PC-9 (cell line): ENCODE measurements at regions of chr22 and their contacts with region 1.

Region 1: GRCh38 chr22:29701155-29701999 is 18.4 kb upstream of the CABP7 start:
- DNase-seq: peak; percentile 60 to 93
- H3K4me3 ChIP-seq: peak overlapping the region; percentile 9; the same call in 1 of the 2 replicates
- H3K27ac ChIP-seq: peak overlapping the region; percentile 81
- H3K4me1 ChIP-seq: peaks cover 54% of the 10 kb centered on the region
- H3K27me3 ChIP-seq: no peaks in the 10 kb centered on the region
- CTCF ChIP-seq: peak; percentile 70

Region 2: DNA sequence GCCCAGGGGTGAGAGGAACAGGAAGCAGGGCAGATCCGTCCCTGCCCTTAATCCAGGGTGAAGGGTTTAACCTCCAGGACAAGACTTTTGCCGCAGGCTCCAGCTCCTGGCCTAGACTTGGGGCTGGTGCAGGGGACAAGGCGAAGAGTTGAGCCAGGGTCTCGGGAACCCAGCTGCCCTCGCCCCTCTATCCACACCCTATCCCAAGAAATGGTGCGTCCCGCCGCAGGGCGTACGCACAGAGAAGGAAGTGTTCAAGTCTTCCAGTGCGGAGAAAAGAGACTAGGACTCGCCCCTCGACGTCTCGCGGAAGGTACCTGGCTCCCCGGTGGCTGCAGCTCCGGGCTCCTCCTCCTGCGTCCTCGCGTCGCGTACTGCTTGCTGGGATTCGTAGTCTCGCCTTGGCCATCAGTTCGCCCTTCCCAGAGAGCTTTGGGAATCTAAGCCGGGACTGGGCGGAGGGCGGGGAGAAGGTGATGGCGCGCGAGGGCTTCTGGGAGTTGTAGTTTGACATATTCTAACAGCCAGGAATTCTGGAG is 65.3 kb after region 1 on chr22 and contains the start of gene ZMAT5:
- CTCF ChIA-PET with region 1: interaction called, 3 read pairs
- POLR2A ChIA-PET with region 1: interaction called, 5 read pairs
- intact Hi-C with region 1: loop called (anchors 2 kb)
- DNase-seq: peak; percentile 91 to 94
- H3K4me3 ChIP-seq: peak within 1 kb of the TSS; percentile 93
- H3K27ac ChIP-seq: peak within 1 kb of the TSS; percentile 76
- H3K4me1 ChIP-seq: peaks cover 30% of the 10 kb centered on the region
- H3K27me3 ChIP-seq: no peaks in the 10 kb centered on the region
- CTCF ChIP-seq: no peak
- total RNA-seq, gene ZMAT5: 14.2 and 15.5 TPM in 2 replicates

Region 3: DNA sequence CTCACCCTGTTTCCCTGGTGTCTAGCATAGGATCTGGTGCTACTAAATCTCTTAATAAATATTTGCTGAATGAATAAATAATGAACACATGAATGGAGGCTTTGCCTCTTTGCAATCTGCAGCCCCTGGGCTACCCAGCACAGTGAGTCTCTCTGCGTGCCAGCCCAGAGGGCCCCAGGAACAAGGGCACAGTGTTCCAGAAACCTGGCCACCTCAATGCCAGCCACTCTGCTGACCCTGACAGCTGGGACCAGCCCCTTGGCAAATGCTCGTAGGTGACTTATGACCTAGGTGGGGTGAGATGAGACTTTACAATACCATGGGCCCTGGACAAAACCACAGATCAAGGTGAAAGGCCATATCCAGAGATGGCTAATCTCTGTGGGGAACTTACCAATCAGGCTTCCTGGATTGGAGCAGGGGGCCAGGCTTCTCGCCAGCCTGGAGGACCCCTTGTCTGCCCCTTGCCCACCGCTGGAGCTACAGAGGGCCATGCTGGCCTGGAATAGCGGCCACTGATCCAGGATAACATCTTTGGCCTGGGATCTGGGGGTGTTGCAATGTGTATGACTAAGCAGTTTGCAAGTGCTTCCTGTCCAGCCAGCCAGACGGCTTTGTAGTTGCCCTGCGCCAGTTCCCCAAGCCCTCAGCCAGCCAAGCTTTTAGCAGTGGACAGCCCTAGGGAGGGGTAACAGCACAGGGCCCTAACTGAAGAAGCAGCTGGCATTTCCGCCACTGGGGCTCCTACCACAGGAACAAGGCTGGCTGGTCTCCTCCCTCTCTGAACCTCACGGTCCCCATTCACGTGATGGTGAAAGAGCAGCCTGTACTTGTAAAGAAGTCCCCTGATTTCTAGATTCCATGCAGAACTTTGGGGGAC is 97.7 kb after region 1 on chr22:
- CTCF ChIA-PET with region 1: no interaction called
- POLR2A ChIA-PET with region 1: interaction called, 6 read pairs
- intact Hi-C with region 1: loop called (anchors 5 kb)
- DNase-seq: peak; percentile 90 to 98
- H3K4me3 ChIP-seq: peak overlapping the region; percentile 44; the same call in 1 of the 2 replicates
- H3K27ac ChIP-seq: peak overlapping the region; percentile 93
- H3K4me1 ChIP-seq: peaks cover 76% of the 10 kb centered on the region
- H3K27me3 ChIP-seq: no peaks in the 10 kb centered on the region
- CTCF ChIP-seq: no peak

Region 4: DNA sequence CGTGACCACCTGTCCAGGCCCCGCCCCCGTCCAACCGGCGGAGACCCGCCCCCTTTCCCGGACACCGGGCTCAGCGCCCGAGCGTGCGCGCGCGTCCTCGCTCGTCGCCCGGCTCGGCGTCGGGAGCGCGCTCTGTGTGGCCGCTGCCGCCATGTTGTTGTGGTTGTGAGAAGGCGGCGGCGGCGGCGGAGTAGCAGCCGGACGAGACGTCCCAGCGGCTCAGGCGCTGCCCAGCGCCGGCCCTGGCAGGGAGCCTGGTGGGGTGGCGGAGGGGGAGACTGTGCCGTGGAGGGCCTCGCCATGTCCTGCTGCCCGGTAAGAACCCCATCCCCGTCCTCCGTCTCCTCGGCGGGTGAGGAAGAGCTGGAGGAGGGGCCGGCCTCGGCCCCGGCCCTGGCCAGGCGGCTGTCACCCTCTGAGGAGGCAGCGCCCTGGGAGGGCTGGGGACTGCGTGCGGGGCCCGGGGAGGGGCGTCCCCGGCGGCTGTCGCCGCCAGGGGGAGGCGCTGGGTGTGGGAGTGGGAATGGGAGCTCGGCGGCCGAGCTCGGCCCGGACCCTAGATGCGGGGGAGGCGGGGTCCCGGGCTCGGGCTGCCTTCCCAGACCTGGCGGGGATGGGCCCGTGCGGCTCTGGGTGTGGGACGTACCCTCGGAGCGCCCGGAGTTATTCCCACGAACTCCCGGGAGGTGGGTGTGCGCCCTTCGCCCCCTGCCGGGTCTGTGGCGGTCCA is 181.8 kb after region 1 on chr22 and contains the start of gene MTMR3:
- CTCF ChIA-PET with region 1: interaction called, 5 read pairs
- POLR2A ChIA-PET with region 1: no interaction called
- intact Hi-C with region 1: loop called (anchors 1 kb)
- DNase-seq: peak; percentile 70 to 94
- H3K4me3 ChIP-seq: peak within 1 kb of the TSS; percentile 97
- H3K27ac ChIP-seq: peak within 1 kb of the TSS; percentile 74
- H3K4me1 ChIP-seq: peaks cover 25% of the 10 kb centered on the region
- H3K27me3 ChIP-seq: no peaks in the 10 kb centered on the region
- CTCF ChIP-seq: peak; percentile 58; the same call in 1 of the 2 replicates
- total RNA-seq, gene MTMR3: 28.1 and 31.1 TPM in 2 replicates

Region 5: GRCh38 chr22:29994027-29994715 is 292.8 kb after region 1 on chr22:
- CTCF ChIA-PET with region 1: no interaction called
- POLR2A ChIA-PET with region 1: no interaction called
- intact Hi-C with region 1: loop called (anchors 5 kb)
- DNase-seq: peak in 1 of 2 experiments; percentile 87
- H3K4me3 ChIP-seq: no peak overlapping the region
- H3K27ac ChIP-seq: peak overlapping the region; percentile 94
- H3K4me1 ChIP-seq: peaks cover 42% of the 10 kb centered on the region
- H3K27me3 ChIP-seq: no peaks in the 10 kb centered on the region
- CTCF ChIP-seq: peak; percentile 45; the same call in 1 of the 2 replicates

Region 6: GRCh38 chr22:30005213-30005857 is 304.0 kb after region 1 on chr22:
- CTCF ChIA-PET with region 1: no interaction called
- POLR2A ChIA-PET with region 1: no interaction called
- intact Hi-C with region 1: loop called (anchors 5 kb)
- DNase-seq: peak; percentile 49 to 66
- H3K4me3 ChIP-seq: no peak overlapping the region
- H3K27ac ChIP-seq: no peak overlapping the region
- H3K4me1 ChIP-seq: no peaks in the 10 kb centered on the region
- H3K27me3 ChIP-seq: no peaks in the 10 kb centered on the region
- CTCF ChIP-seq: peak; percentile 98

Region 7: DNA sequence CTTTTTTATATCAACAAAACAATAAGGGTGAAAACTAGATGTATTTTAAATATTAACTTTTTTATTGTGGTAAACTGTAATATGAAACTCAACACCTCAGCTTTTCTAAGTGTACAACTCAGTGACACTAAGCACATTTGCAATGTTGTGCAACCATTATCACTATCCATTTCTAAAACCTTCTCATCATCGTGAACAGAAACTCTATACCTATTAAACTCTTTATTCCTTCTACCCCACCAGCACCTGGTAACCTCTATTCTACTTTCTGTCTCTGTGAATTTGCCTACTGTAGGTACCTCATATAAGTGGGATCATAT is 388.2 kb after region 1 on chr22:
- CTCF ChIA-PET with region 1: no interaction called
- POLR2A ChIA-PET with region 1: no interaction called
- intact Hi-C with region 1: loop called (anchors 5 kb)
- DNase-seq: no peak
- H3K4me3 ChIP-seq: no peak overlapping the region
- H3K27ac ChIP-seq: peak overlapping the region; percentile 38
- H3K4me1 ChIP-seq: peaks cover 31% of the 10 kb centered on the region
- H3K27me3 ChIP-seq: no peaks in the 10 kb centered on the region
- CTCF ChIP-seq: no peak